Heart left ventricle (tissue), 16 donors: ENCODE measurements at regions of chr15 and their contacts with region 1.

Region 1: GRCh38 chr15:49809894-49810609 is 189.2 kb downstream of the DTWD1 start:
- DNase-seq: no peak
- ATAC-seq: no peak
- H3K4me3 ChIP-seq: no peak overlapping the region
- H3K27ac ChIP-seq: peak overlapping the region in 3 of 12 donors; percentile 23 to 54 (median 41)
- H3K4me1 ChIP-seq: peaks cover 0 to 9% (median 0%) of the 10 kb centered on the region in 12 donors
- H3K27me3 ChIP-seq: no peaks in the 10 kb centered on the region
- CTCF ChIP-seq: no peak
- POLR2A ChIP-seq: no peak

Region 2: GRCh38 chr15:49741712-49742111 is 68.3 kb before region 1 on chr15:
- intact Hi-C with region 1: loop called in 1 of 10 experiments (anchors 10 kb)
- DNase-seq: peak in 2 of 5 donors; percentile 20 to 28
- ATAC-seq: peak in 1 of 4 donors; percentile 41
- H3K4me3 ChIP-seq: no peak overlapping the region
- H3K27ac ChIP-seq: no peak overlapping the region
- H3K4me1 ChIP-seq: no peaks in the 10 kb centered on the region
- H3K27me3 ChIP-seq: no peaks in the 10 kb centered on the region
- CTCF ChIP-seq: no peak
- POLR2A ChIP-seq: no peak

Region 3: DNA sequence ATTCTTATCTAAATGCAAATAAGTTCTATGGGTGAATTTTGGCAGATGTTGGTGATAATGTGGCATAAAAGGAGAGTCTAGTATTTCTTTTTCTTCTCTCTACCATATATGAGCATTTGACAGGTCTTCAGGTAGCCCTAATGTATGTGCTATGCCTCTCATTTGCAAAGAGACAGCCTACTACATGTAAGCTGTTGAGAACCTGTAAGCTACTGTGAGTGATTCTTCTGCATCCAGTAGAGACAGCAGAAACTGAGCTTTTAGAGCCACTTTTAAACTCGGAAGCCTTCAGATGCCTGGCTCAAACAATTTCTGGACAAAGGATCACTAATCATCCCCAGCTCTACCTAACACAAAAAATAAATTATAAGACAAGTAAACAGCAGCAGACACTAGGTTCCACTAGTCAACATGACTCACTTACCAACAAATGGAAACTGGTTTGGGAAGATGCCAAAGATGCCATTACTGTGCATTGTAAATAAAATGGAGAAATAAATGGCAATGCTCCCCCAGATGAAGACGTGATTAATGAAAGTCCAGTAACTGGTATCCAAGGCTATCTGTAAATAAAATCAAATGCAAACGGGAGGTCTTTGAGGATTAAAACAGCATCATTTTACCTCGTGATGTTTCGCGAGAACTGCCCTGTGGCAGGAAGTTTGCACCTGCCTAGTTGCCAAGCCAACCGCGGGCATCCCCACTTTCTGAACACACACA is 56.0 kb after region 1 on chr15:
- intact Hi-C with region 1: no loop called
- DNase-seq: no peak
- ATAC-seq: no peak
- H3K4me3 ChIP-seq: no peak overlapping the region
- H3K27ac ChIP-seq: no peak overlapping the region
- H3K4me1 ChIP-seq: peaks cover 0 to 9% (median 0%) of the 10 kb centered on the region in 12 donors
- H3K27me3 ChIP-seq: no peaks in the 10 kb centered on the region
- CTCF ChIP-seq: no peak
- POLR2A ChIP-seq: no peak